ENCODE measurements at regions of chr12 and their contacts with region 1.

Region 1: GRCh38 chr12:133080368-133081158 is at the start of gene ZNF140:
- DNase-seq: peak; percentile 96
- H3K4me3 ChIP-seq: peak within 1 kb of the TSS; percentile 90
- H3K27ac ChIP-seq: peak within 1 kb of the TSS; percentile 96
- H3K4me1 ChIP-seq: no peaks in the 10 kb centered on the region
- H3K27me3 ChIP-seq: no peaks in the 10 kb centered on the region
- CTCF ChIP-seq: peak; percentile 36
- total RNA-seq, gene ZNF140: 9.4 to 15.6 TPM

Region 2: DNA sequence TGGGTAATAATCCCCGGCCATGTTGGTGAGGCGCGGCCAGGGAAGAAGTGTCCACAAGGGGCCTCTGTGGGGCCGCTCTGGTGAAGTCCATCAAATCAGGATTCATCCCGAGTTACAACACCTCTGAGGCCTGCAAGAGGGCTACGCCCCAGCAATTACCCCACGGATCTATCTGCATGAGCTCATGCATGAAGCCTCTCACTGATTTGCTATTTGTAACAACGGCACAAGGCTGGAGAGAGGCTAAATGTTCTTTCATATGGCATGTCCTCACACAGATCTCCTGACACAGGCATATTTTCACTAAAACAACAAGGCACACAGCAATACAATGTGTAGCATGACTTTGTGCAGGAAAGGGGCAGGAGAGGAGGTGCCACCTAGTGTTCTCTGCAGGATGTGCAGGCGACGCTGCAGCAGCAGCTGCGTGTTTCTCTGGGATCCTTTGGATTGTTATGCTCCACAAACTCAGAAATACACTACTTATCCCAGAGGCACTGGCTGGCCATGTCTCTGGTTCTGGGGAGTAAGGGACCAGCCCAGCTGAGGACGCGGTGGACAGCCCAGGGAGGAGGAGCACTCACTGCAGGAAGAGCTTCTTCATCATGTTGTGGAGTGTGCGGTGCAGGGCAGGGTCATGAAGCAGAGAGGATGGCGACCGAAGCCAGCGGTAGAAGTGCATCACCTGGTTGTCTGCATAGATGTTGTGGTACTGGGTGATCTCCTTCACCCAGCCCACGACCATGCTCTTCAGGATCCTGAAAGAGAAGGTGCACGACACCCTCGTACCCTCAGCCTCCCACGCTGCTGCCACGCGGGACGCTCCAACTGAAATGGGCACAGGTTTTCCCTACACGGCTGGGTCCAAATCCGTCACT is 441.8 kb before region 1 on chr12:
- intact Hi-C with region 1: no loop called
- DNase-seq: no peak
- H3K4me3 ChIP-seq: no peak overlapping the region
- H3K27ac ChIP-seq: no peak overlapping the region
- H3K4me1 ChIP-seq: no peaks in the 10 kb centered on the region
- H3K27me3 ChIP-seq: no peaks in the 10 kb centered on the region
- CTCF ChIP-seq: peak; percentile 72

Region 3: GRCh38 chr12:132837693-132838409 is 242.7 kb before region 1 on chr12:
- intact Hi-C with region 1: no loop called
- DNase-seq: no peak
- H3K4me3 ChIP-seq: no peak overlapping the region
- H3K27ac ChIP-seq: peak overlapping the region; percentile 67
- H3K4me1 ChIP-seq: peaks cover 4% of the 10 kb centered on the region
- H3K27me3 ChIP-seq: no peaks in the 10 kb centered on the region
- CTCF ChIP-seq: no peak

Region 4: DNA sequence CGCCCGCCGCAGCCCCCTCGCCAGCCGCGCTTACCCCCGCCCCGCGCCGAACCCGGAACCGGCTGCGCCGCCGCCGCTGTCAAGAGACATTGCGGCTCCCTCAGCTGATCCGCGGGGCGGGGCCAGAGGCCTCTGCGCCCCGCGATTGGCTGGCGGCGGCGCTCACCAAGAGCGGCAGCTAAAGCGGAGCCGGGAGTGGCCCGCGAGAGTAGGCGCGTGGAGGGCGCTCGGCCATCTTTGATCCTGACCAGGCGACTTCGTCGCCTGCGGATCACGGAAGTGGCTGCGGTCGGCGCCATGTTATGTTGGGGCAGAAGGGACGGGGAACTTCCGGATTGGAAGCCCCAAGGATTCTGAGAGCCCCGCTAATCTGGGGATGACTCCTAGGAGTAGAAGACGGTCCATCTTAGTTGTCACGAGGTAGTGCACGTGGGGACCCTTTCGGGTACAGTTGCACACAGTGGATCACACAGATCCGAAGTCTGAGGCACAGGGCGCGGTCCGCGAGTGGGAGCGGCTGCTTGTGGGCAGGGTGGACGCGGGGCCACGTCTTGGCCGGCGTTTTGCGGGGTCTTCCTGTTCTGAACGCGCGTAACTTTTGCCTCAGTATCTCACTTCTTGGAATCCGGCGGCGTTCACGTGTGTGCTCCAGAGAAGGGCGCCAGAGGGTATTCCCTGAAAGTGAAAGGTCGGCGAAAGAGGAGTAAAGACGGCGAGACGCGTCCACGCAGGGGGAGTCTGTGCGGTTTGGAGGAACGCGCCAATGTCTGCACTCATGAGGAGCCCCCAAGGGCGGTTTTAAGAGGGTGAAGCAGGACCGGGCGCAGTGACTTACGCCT is 192.8 kb before region 1 on chr12 and contains the start of gene CHFR:
- intact Hi-C with region 1: no loop called
- DNase-seq: peak; percentile 95
- H3K4me3 ChIP-seq: peak within 1 kb of the TSS; percentile 95
- H3K27ac ChIP-seq: peak within 1 kb of the TSS; percentile 93
- H3K4me1 ChIP-seq: no peaks in the 10 kb centered on the region
- H3K27me3 ChIP-seq: no peaks in the 10 kb centered on the region
- CTCF ChIP-seq: no peak
- total RNA-seq, gene CHFR: 37.8 to 41.4 TPM

Region 5: DNA sequence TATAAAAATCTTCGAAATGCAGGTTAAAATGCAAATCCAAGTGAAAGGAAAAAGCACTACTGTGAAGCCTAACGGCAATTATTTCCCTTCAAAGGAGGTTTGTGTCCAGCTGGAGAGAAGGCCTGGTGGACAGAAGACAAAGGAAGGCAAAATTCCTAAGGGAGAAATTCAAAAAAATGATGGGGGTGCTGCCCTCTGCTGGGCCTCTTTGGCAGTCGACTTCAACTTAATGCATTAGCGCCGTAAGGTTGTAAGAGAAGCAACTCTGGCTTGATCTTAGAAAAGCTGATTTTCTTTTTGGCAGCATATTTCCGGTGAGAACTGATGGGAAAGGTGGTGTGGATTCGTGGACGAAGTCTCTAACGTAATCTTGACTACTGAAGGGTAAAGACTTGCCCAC is 158.9 kb before region 1 on chr12:
- intact Hi-C with region 1: no loop called
- DNase-seq: no peak
- H3K4me3 ChIP-seq: no peak overlapping the region
- H3K27ac ChIP-seq: no peak overlapping the region
- H3K4me1 ChIP-seq: no peaks in the 10 kb centered on the region
- H3K27me3 ChIP-seq: no peaks in the 10 kb centered on the region
- CTCF ChIP-seq: no peak

Region 6: GRCh38 chr12:132986001-132986912 is 94.3 kb before region 1 on chr12 and contains the start of gene ZNF26:
- intact Hi-C with region 1: loop called (anchors 2 kb)
- DNase-seq: peak; percentile 94
- H3K4me3 ChIP-seq: peak within 1 kb of the TSS; percentile 99
- H3K27ac ChIP-seq: peak within 1 kb of the TSS; percentile 46
- H3K4me1 ChIP-seq: no peaks in the 10 kb centered on the region
- H3K27me3 ChIP-seq: no peaks in the 10 kb centered on the region
- CTCF ChIP-seq: no peak
- total RNA-seq, gene ZNF26: 6.7 to 7.2 TPM

Region 7: GRCh38 chr12:133037207-133038005 is 43.2 kb before region 1 on chr12 and contains the start of gene ZNF84:
- intact Hi-C with region 1: loop called (anchors 5 kb)
- DNase-seq: peak; percentile 98
- H3K4me3 ChIP-seq: peak within 1 kb of the TSS; percentile 91
- H3K27ac ChIP-seq: peak within 1 kb of the TSS; percentile 94
- H3K4me1 ChIP-seq: peaks cover 9% of the 10 kb centered on the region
- H3K27me3 ChIP-seq: no peaks in the 10 kb centered on the region
- CTCF ChIP-seq: no peak
- total RNA-seq, gene ZNF84: 8.7 to 15.7 TPM

Region 8: DNA sequence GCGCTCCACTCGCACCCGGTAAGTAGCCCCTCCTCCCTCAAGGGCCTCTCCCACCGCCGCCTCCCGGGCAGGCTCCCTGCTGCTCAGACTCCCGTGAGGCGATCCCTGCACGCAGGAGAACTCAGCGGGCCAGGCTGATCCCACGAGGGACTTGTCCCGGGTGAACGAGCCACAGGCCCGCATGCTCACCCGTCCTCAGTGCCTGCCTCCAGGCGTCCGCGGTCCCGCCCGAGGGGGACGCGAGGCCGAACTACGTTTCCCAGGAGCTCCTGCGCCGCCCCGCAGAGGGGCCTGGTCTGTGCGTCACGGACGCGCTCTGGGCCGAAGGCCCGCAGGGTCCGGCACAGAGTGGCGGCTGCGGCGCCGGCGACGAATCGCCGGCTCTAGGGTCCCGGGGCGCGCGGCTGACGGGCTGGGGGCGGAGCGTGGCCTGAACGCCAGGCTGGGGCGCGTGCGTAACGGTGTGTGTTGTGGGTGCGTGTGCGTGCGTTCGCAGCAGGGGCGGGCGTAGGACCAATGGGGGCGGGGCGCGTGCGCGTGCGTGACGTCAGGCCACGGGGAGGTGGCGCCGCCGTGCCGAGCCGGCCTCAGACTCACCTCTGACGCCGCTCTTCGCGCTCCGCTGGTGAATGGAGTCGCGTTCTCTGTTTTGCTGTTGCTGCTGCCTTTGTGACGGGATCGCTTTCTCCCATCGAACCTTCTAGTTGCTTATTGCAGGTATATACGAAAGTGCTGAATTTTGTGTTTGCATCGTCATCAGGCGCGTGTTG is 49.7 kb after region 1 on chr12 and contains the starts of genes ZNF10 and ZNF891:
- intact Hi-C with region 1: loop called (anchors 5 kb)
- DNase-seq: peak; percentile 98
- H3K4me3 ChIP-seq: peak within 1 kb of the TSS; percentile 70
- H3K27ac ChIP-seq: peak within 1 kb of the TSS; percentile 97
- H3K4me1 ChIP-seq: no peaks in the 10 kb centered on the region
- H3K27me3 ChIP-seq: no peaks in the 10 kb centered on the region
- CTCF ChIP-seq: no peak
- total RNA-seq, gene ZNF10: 2.7 to 4.1 TPM
- total RNA-seq, gene ZNF891: 1.0 to 1.3 TPM

Measured in colonic mucosa (tissue), 4 donors.